Activated B cell treated with CpG ODN at 0.5 μM for 24 hours (primary cell): ENCODE measurements at regions of chr1 and their contacts with region 1.

Region 1: DNA sequence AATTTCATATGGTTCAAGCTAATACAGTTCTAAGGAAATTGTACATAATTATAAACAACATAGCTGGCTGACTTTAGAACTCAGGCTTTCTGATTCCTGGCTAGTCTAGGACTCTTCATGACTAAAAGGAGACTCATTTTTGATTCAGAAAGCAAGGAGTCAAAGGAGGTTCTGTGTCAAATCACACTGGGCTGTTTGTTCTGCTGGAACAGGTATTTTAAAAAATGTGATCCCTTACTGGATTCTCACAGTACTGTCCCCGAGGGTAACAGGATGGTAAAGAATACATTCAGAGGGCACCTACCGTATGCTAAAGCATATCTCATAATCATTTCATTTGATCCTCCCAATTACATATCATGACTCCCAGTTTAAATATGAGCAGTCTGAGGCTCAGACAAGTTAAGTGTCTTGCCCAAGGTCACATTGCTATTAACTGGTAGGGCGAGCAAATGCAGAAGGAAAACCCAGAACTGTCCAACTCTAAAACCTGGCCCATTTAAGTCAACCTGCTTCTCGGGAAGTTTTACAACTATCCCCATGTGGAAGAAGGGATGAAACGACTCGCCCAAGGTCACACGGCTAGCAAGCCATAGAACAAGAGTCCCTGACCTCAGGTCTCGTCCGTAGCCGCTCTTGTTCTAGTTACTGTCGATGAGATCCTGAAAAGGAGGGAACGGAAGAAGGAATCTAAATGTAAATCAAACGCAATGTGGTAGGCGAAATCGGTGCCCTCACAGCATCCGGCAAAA is 675 bp downstream of the MYSM1 start:
- DNase-seq: no peak
- ATAC-seq: no peak
- H3K4me3 Mint-ChIP-seq: peak overlapping the region; percentile 99
- H3K27ac Mint-ChIP-seq: peak overlapping the region; percentile 94
- H3K4me1 Mint-ChIP-seq: peaks cover 15% of the 10 kb centered on the region
- H3K27me3 Mint-ChIP-seq: no peaks in the 10 kb centered on the region
- CTCF ChIP-seq: no peak

Region 2: DNA sequence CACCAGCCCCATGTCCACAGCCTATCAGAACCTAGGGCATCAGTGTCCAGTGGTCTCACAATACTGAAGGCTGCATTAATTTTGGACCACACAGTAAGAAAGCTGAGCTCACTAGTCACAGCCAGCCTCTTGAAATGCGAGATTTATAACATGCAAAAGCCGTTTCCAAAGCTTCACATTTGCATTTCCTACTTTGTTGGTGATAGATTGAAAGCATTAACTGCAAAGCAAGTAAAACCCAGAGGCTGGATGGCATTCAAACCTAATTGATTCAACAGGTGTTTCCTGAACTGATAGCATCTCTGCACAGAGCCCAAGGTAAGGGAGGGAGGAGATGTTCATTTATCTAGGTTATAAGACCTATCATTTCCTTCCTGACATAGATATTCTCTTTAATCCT is 562.8 kb before region 1 on chr1:
- CTCF ChIA-PET with region 1: no interaction called
- POLR2A ChIA-PET with region 1: no interaction called
- intact Hi-C with region 1: no loop called
- DNase-seq: no peak
- ATAC-seq: no peak
- H3K4me3 Mint-ChIP-seq: no peak overlapping the region
- H3K27ac Mint-ChIP-seq: no peak overlapping the region
- H3K4me1 Mint-ChIP-seq: no peaks in the 10 kb centered on the region
- H3K27me3 Mint-ChIP-seq: no peaks in the 10 kb centered on the region
- CTCF ChIP-seq: no peak

Region 3: DNA sequence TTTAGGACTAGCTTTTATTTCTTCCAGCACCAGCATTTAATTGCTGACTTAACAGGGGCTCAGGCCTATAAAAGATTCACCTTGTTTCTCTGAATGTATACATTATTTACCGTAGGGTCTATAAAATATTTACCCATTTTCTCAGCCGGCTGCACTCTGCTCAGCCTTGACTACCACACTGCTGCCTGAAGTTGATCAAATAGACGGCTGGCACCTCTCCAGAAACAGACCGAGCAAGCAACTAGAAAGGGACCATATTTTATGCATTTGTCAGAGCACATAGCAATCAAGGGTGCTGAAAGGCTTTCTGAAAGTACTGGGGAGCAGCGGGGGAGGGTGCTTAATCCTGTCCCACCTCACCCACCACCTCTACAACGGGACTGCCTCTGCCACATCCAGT is 533.0 kb after region 1 on chr1:
- CTCF ChIA-PET with region 1: no interaction called
- POLR2A ChIA-PET with region 1: no interaction called
- intact Hi-C with region 1: no loop called
- DNase-seq: no peak
- ATAC-seq: no peak
- H3K4me3 Mint-ChIP-seq: no peak overlapping the region
- H3K27ac Mint-ChIP-seq: no peak overlapping the region
- H3K4me1 Mint-ChIP-seq: no peaks in the 10 kb centered on the region
- H3K27me3 Mint-ChIP-seq: no peaks in the 10 kb centered on the region
- CTCF ChIP-seq: no peak

Region 4: DNA sequence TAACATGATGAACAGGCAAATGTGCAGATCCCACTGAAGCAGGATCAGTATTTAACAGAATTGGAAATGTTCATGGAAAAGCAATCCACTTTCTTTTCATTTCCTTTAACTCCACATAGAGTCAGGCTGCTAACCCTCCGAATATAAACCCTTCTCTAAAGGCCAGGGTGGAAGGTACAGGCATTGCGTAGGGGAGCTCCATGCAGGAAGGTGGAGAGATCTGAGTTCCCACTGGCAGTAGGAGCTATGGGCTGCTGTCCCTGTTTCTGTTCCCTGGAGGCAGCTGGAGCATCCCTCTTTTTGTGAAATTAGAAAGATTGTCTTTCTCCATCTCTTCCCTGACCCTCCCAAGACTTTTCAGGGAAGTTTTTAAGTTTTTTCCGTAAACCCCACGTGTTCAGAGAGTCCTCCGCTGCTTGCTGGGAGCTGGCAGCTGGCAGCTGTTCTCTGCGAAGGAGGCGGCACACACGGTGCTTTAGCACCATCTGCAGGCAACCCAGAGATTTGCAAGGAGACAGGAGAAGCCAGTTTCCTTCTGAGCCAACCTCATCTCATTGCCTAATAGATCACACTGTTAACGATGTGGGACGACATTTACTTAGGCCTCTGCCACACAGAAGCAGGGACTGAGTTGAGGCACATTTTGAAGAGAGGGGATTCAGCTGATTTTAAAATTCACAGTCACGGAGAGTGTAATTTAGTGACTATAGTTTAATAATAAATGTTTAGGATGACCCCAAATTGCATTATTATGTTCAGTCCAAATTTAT is 1060.2 kb after region 1 on chr1:
- CTCF ChIA-PET with region 1: no interaction called
- POLR2A ChIA-PET with region 1: no interaction called
- intact Hi-C with region 1: loop called (anchors 1 kb)
- DNase-seq: peak; percentile 50
- ATAC-seq: peak; percentile 93
- H3K4me3 Mint-ChIP-seq: peak overlapping the region; percentile 35
- H3K27ac Mint-ChIP-seq: no peak overlapping the region
- H3K4me1 Mint-ChIP-seq: peaks cover 4% of the 10 kb centered on the region
- H3K27me3 Mint-ChIP-seq: no peaks in the 10 kb centered on the region
- CTCF ChIP-seq: peak; percentile 96

Region 5: GRCh38 chr1:59814180-59814900 is 1115.2 kb after region 1 on chr1:
- CTCF ChIA-PET with region 1: no interaction called
- POLR2A ChIA-PET with region 1: no interaction called
- intact Hi-C with region 1: loop called (anchors 2 kb)
- DNase-seq: peak; percentile 73
- ATAC-seq: peak; percentile 94
- H3K4me3 Mint-ChIP-seq: no peak overlapping the region
- H3K27ac Mint-ChIP-seq: peak overlapping the region; percentile 78
- H3K4me1 Mint-ChIP-seq: peaks cover 5% of the 10 kb centered on the region
- H3K27me3 Mint-ChIP-seq: peaks cover 3% of the 10 kb centered on the region
- CTCF ChIP-seq: no peak